Activated CD8-positive, alpha-beta memory T cell treated with anti-CD3 and anti-CD28 coated beads, Interleukin-2, amount 10 ng/mL, durations not matched to agents 7 days and 5 days (primary cell): ENCODE measurements at regions of chr3 and their contacts with region 1.

Region 1: DNA sequence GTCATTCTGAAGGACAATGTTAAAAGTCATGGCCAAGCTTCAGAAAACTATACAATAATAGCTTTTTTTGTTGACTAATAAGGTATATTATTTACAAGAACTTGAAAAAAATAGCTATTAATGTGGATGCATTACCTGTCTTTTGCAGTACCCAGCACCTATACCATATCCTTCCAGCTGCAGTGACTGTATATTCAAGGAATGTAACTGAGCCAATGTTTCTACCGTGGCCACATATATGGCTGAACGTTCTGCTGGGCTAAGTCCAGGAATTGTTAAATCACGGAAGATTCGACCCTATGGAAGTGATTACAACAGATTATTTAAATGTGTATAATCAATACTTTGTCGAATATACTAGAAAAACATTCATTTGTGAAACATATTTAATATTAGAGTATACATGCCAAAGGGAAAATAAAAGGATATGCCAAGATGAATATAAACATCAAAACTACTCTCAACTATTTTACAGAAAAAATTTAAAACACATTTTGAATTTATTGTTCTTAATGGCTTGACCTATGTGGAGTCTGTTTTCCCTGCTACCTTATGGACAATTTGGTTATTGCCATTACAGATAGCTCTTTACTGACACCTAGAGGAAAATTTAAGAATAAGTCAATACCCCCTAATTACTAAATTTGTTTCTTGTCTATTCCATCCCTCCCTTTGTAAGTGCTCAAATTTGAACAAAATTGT is 17.6 kb downstream of the ACAD11 start:
- DNase-seq: no peak
- ATAC-seq: peak; percentile 69
- H3K4me3 Mint-ChIP-seq: no peak overlapping the region
- H3K27ac Mint-ChIP-seq: no peak overlapping the region
- H3K4me1 Mint-ChIP-seq: peaks cover 12% of the 10 kb centered on the region
- H3K27me3 Mint-ChIP-seq: no peaks in the 10 kb centered on the region

Region 2: DNA sequence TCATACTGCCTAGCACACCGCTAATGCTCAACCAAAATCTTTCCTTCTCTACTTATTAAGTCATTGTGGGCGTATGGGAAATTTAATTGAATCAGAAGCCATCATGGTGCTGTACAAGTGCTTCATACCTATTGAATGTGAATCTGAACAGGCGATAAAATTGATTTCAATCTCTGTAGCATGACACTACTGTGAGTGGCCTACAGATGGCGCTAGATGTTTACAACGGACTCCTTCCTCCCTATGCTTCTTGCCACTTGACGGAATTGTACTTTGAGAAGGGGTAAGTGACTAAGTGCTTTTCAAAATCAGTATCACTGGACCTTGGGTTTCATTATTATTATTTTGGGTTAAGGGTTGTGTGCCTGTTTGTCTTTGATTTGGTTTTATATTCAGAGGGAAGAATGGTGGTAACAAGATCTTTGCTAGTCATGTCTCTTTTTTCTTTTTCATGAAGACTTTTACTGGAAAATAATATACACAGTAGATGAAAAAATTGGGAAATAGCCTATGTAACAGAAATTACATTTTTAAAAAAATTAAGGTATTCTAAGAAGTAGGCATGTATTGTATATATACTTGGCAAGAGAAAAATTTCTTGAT is 289.3 kb before region 1 on chr3:
- CTCF ChIA-PET with region 1: interaction called, 11 read pairs
- DNase-seq: peak; percentile 78
- ATAC-seq: peak; percentile 78
- H3K4me3 Mint-ChIP-seq: no peak overlapping the region
- H3K27ac Mint-ChIP-seq: no peak overlapping the region
- H3K4me1 Mint-ChIP-seq: peaks cover 4% of the 10 kb centered on the region
- H3K27me3 Mint-ChIP-seq: peaks cover 11% of the 10 kb centered on the region

Region 3: DNA sequence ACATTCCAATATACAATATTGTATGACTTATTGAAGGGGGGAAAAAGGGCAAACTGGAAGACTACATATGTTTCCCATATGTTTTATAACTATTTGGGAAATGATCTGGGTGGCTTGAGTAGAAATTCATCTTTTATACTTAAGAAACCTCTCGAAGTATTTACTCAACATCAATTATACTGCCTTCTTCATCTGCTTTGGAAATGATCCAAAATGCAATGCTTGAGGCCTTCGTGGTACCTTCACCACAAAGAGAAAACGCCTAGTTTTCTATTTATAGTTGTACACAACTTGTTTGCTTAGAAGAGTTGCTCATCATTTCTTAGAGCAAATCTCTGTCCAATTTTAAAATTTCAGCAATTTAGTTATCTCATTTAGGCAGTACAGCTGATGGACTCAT is 26.1 kb before region 1 on chr3:
- CTCF ChIA-PET with region 1: no interaction called
- DNase-seq: no peak
- ATAC-seq: no peak
- H3K4me3 Mint-ChIP-seq: no peak overlapping the region
- H3K27ac Mint-ChIP-seq: no peak overlapping the region
- H3K4me1 Mint-ChIP-seq: no peaks in the 10 kb centered on the region
- H3K27me3 Mint-ChIP-seq: no peaks in the 10 kb centered on the region

Region 4: GRCh38 chr3:132659365-132660051 is 17.5 kb after region 1 on chr3 and contains the start of gene ACAD11:
- CTCF ChIA-PET with region 1: interaction called, 21 read pairs
- DNase-seq: peak; percentile 56
- ATAC-seq: peak; percentile 59
- H3K4me3 Mint-ChIP-seq: peak within 1 kb of the TSS; percentile 90
- H3K27ac Mint-ChIP-seq: peak within 1 kb of the TSS; percentile 94
- H3K4me1 Mint-ChIP-seq: peaks cover 46% of the 10 kb centered on the region
- H3K27me3 Mint-ChIP-seq: no peaks in the 10 kb centered on the region
- total RNA-seq, gene ACAD11: 12.3 to 19.6 TPM